MCF 10A (cell line): ENCODE measurements at regions of chr20 and their contacts with region 1.

Region 1: DNA sequence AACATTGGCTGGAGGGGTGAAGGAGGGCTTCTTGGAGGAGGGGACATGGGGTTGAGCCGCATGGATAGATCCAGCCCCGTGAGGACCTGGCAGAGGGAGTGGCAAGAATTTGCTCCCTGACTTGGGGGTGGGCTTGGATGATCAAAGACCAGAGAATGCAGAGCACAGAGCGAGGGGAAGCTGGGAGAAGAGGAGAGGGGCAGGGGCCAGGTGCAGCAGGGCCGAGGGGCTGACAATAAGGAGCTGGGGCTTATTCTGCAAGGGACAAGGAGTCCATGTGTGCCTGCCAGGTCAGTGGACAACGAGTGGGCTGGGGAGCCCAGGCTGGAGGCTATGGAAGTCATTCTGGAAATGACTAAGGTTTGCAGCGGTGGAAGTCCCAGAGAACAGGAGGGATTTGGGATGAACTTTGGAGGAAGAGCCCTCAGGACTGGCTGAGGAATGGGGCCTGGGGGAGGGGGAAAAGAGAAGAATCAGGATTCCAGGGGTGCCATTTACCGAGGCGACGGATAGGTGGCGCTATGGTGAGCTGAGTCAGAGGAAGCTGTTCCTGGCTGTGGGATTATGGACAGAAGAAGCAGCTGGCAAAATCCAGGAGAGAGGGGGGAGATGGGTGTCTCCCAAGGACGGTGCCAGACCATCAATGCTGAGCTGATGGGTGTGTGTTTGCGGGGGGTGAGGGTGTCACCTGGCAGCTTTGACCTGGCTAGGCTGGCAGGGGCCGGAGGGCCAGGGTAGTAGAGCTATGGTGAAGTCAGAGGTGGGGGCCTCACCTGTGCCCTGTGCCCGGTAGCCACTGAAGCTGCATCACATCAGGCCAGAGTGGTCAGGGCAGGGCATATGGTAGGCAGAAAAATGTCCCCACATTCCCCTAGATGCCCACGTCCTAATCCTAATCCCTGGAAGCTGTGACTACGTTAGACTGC is 7.8 kb downstream of the KCNG1 start:
- DNase-seq: peak; percentile 63
- H3K4me3 Mint-ChIP-seq: no peak overlapping the region
- H3K27ac Mint-ChIP-seq: no peak overlapping the region
- H3K4me1 Mint-ChIP-seq: peaks cover 10% of the 10 kb centered on the region
- H3K27me3 Mint-ChIP-seq: no peaks in the 10 kb centered on the region
- CTCF ChIP-seq: peak; percentile 71

Region 2: GRCh38 chr20:51029963-51030920 is 15.2 kb after region 1 on chr20:
- CTCF ChIA-PET with region 1: interaction called, 13 read pairs
- POLR2A ChIA-PET with region 1: interaction called, 4 read pairs
- intact Hi-C with region 1: no loop called
- DNase-seq: no peak
- H3K4me3 Mint-ChIP-seq: no peak overlapping the region
- H3K27ac Mint-ChIP-seq: no peak overlapping the region
- H3K4me1 Mint-ChIP-seq: peaks cover 11% of the 10 kb centered on the region
- H3K27me3 Mint-ChIP-seq: peaks cover 26% of the 10 kb centered on the region
- CTCF ChIP-seq: no peak

Region 3: DNA sequence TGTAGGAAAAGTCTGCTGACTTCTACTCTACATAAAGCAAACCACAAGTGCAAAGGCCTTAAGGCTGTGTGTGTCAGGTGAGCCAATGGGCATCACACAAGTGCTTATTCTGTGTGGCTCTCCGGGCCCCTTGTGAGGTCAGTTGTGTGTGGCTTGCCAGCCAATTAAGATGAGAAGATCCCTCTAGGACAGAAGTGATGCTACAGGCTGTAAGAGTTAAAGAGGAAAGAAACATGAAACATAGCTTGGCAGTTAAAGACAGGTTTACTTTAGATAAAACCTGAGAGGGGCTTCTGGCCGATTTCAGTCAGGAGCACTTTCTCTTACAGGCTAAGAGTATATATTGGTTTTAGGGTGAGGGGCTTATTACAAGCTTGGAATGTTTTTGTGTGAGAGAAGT is 285.0 kb after region 1 on chr20:
- CTCF ChIA-PET with region 1: interaction called, 70 read pairs
- POLR2A ChIA-PET with region 1: no interaction called
- intact Hi-C with region 1: no loop called
- DNase-seq: no peak
- H3K4me3 Mint-ChIP-seq: no peak overlapping the region
- H3K27ac Mint-ChIP-seq: no peak overlapping the region
- H3K4me1 Mint-ChIP-seq: no peaks in the 10 kb centered on the region
- H3K27me3 Mint-ChIP-seq: no peaks in the 10 kb centered on the region
- CTCF ChIP-seq: no peak

Region 4: DNA sequence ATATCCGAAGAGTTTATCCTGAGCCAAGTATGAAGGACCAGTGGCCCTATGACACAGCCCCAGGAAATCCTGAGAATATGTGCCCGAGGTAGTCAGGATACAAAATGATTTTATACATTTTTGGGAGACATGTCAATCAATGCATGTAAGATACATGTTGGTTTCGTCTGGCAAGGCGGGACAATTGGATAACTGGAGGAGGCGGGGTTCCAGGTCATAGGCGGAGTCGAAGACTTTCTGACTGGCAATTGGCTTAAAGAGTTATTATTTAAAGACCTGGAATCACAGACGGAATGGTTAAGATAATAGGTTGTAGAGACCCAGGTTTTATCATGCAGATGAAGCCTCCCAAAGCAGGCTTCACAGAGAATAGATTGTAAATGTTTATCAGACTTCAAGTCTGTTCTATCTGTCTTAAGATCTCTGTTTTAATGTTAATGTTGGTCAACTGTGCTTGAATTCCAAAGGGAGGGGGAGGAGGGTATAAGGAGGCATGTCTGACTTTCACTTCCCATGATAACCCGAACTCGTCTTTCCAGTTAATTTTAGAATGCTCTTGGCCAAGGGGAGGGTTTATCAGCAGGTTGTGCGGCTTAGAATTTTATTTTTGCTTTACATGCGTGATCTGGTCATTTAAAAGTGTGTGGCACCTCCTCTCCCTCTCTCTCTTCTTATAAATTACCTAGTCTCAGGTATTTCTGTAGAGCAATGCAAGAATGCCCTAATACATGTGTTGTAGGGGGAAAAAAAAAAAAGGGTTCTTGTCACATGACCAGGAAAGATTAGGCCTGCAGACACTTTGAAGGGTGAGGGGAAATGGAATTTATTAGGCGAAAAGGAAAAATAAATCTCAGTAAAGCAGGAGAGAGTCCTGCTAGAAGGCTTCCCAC is 296.8 kb after region 1 on chr20:
- CTCF ChIA-PET with region 1: interaction called, 70 read pairs
- POLR2A ChIA-PET with region 1: no interaction called
- intact Hi-C with region 1: no loop called
- DNase-seq: no peak
- H3K4me3 Mint-ChIP-seq: no peak overlapping the region
- H3K27ac Mint-ChIP-seq: no peak overlapping the region
- H3K4me1 Mint-ChIP-seq: peaks cover 5% of the 10 kb centered on the region
- H3K27me3 Mint-ChIP-seq: no peaks in the 10 kb centered on the region
- CTCF ChIP-seq: no peak